CD4-positive, alpha-beta T cell (primary cell): ENCODE measurements at regions of chr6 and their contacts with region 1.

Region 1: GRCh38 chr6:100664274-100665040 is 199.7 kb upstream of the SIM1 start:
- DNase-seq: peak in 3 of 14 experiments; percentile 35 to 45 (median 43)
- ATAC-seq: peak; percentile 48
- H3K4me3 ChIP-seq: no peak overlapping the region
- H3K4me3 Mint-ChIP-seq: no peak overlapping the region
- H3K27ac ChIP-seq: peak overlapping the region in 1 of 2 donors; percentile 12
- H3K27ac Mint-ChIP-seq: peak overlapping the region; percentile 7
- H3K4me1 ChIP-seq: no peaks in the 10 kb centered on the region
- H3K4me1 Mint-ChIP-seq: peaks cover 10% of the 10 kb centered on the region
- H3K27me3 ChIP-seq: no peaks in the 10 kb centered on the region
- H3K27me3 Mint-ChIP-seq: no peaks in the 10 kb centered on the region
- CTCF ChIP-seq: peak; percentile 77

Region 2: DNA sequence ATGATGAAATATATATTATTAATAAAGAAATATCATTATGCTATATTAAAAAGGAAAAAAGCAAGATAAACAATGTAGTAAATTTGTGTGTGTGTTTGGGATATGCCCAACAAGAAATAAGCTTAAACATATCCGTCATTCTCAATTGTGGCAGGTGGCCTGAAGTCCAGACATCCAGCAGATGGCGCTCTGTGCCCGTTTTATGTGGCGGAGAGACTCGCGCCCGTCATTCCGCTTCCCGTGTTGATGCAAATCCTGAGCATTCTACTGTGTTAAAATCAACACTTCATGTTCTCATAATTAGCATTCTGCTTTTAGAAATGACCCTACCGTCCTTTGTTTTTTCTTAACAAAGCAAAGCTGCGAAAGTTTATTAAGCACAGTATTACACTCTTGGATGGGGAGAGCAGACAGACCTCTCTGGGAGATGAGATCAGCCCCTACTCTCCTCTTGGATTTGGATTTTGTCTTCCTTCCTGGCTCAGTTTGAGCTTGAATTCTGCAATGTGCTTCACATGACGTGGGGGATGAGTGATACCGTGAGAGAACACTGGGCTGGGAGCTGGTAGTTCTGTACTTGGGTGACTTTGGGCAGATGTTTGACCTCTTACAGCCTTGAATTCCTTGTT is 796.3 kb before region 1 on chr6:
- CTCF ChIA-PET with region 1: no interaction called
- POLR2A ChIA-PET with region 1: no interaction called
- intact Hi-C with region 1: loop called (anchors 5 kb)
- DNase-seq: peak; percentile 46 to 77 (median 58)
- ATAC-seq: peak; percentile 55
- H3K4me3 ChIP-seq: no peak overlapping the region
- H3K4me3 Mint-ChIP-seq: no peak overlapping the region
- H3K27ac ChIP-seq: no peak overlapping the region
- H3K27ac Mint-ChIP-seq: no peak overlapping the region
- H3K4me1 ChIP-seq: peaks cover 5% of the 10 kb centered on the region
- H3K4me1 Mint-ChIP-seq: peaks cover 6% of the 10 kb centered on the region
- H3K27me3 ChIP-seq: peaks cover 0 to 5% of the 10 kb centered on the region in 2 experiments
- H3K27me3 Mint-ChIP-seq: peaks cover 64% of the 10 kb centered on the region
- CTCF ChIP-seq: peak; percentile 83

Region 3: DNA sequence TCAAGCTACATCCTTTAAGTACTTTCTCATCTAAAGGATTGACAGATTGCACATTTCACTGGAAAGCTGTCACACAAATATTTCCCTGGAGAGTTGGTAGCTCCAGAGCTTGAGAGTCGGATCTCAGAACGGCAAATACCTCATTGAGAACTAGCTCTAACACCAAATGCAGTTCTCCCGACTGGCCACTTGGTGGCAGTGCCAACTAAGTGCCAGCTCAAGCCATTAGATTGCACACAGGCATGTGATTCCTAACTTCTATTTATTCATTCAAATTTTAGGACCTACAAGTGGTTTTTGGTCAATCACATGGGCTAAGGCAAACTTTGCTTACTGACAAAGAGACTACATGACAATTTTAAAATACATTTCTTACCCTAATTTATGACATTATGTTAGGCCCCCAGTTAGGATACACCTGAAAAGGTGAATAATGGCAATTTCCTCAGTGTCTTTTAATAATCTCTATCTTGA is 662.5 kb before region 1 on chr6:
- CTCF ChIA-PET with region 1: interaction called, 3 read pairs
- POLR2A ChIA-PET with region 1: no interaction called
- intact Hi-C with region 1: loop called (anchors 2 to 5 kb)
- DNase-seq: peak in 12 of 14 experiments; percentile 2 to 52 (median 20)
- ATAC-seq: peak; percentile 39
- H3K4me3 ChIP-seq: no peak overlapping the region
- H3K4me3 Mint-ChIP-seq: no peak overlapping the region
- H3K27ac ChIP-seq: no peak overlapping the region
- H3K27ac Mint-ChIP-seq: no peak overlapping the region
- H3K4me1 ChIP-seq: no peaks in the 10 kb centered on the region
- H3K4me1 Mint-ChIP-seq: no peaks in the 10 kb centered on the region
- H3K27me3 ChIP-seq: peaks cover 0 to 6% of the 10 kb centered on the region in 2 experiments
- H3K27me3 Mint-ChIP-seq: peaks cover 59% of the 10 kb centered on the region
- CTCF ChIP-seq: peak; percentile 93

Region 4: GRCh38 chr6:100116411-100117194 is 547.9 kb before region 1 on chr6:
- CTCF ChIA-PET with region 1: no interaction called
- POLR2A ChIA-PET with region 1: no interaction called
- intact Hi-C with region 1: loop called (anchors 5 to 10 kb)
- DNase-seq: peak in 4 of 14 experiments; percentile 7 to 29 (median 25)
- ATAC-seq: no peak
- H3K4me3 ChIP-seq: no peak overlapping the region
- H3K4me3 Mint-ChIP-seq: no peak overlapping the region
- H3K27ac ChIP-seq: no peak overlapping the region
- H3K27ac Mint-ChIP-seq: no peak overlapping the region
- H3K4me1 ChIP-seq: no peaks in the 10 kb centered on the region
- H3K4me1 Mint-ChIP-seq: no peaks in the 10 kb centered on the region
- H3K27me3 ChIP-seq: no peaks in the 10 kb centered on the region
- H3K27me3 Mint-ChIP-seq: peaks cover 24% of the 10 kb centered on the region
- CTCF ChIP-seq: peak; percentile 28